Transverse colon (tissue), 4 donors: ENCODE measurements at regions of chr10 and their contacts with region 1.

Region 1: GRCh38 chr10:71319042-71319799 is at the start of gene SLC29A3:
- DNase-seq: peak; percentile 88
- H3K4me3 ChIP-seq: peak within 1 kb of the TSS; percentile 61 to 88 (median 76)
- H3K27ac ChIP-seq: peak within 1 kb of the TSS; percentile 80 to 88 (median 84)
- H3K4me1 ChIP-seq: peaks cover 4 to 21% (median 11%) of the 10 kb centered on the region in 4 donors
- H3K27me3 ChIP-seq: no peaks in the 10 kb centered on the region
- CTCF ChIP-seq: peak; percentile 49 to 75 (median 64)
- EP300 ChIP-seq: no peak
- POLR2A ChIP-seq: peak; percentile 56
- total RNA-seq, gene SLC29A3: 0.75 to 6.4 (median 3.4) TPM

Region 2: DNA sequence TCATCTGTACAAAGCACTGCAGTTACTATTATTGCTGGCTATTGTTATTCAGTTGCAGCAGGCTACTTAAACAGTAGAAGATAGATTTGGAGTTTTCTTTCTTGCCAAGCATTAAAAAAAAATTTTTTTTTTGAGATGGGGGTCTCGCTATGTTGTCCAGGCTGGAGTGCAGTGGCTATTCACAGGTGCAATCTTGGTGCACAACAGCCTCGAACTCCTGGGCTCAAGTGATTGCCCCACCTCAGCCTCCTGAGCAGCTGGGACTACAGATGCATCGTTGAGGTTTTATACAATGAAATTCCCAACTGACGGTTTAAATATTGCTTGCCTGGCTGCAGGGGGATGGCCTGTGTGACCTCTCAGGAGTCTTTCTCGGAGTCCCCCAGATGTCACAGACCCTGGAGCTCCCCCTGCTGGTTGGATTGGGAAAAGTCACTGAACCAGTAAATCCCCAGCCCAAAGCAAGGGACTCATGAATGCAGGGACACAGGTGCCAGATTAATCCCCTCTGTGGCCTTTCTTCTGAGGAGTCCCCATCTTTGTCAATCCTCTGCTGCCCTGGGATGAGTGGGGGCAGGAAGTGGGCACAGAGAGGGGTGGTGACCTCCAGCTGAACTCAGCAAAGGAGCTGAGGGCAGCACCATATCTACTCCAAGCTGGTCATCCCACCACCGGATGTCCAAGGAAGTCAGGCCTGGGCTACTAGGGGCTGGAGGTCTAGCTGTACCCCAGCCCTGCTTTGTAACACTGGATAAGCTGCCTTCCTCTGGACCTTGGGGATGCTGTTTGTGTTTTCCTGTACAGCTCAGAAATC is 250.8 kb after region 1 on chr10:
- in situ Hi-C with region 1: loop called (anchors 10 to 25 kb)
- intact Hi-C with region 1: loop called (anchors 10 kb)
- DNase-seq: peak; percentile 81
- H3K4me3 ChIP-seq: no peak overlapping the region
- H3K27ac ChIP-seq: no peak overlapping the region
- H3K4me1 ChIP-seq: no peaks in the 10 kb centered on the region
- H3K27me3 ChIP-seq: no peaks in the 10 kb centered on the region
- CTCF ChIP-seq: peak; percentile 81 to 91 (median 84)
- EP300 ChIP-seq: no peak
- POLR2A ChIP-seq: no peak

Region 3: GRCh38 chr10:71597821-71598498 is 278.7 kb after region 1 on chr10:
- in situ Hi-C with region 1: loop called in 1 of 4 experiments (anchors 10 kb)
- intact Hi-C with region 1: no loop called
- DNase-seq: peak; percentile 21
- H3K4me3 ChIP-seq: no peak overlapping the region
- H3K27ac ChIP-seq: peak overlapping the region; percentile 67 to 76 (median 74)
- H3K4me1 ChIP-seq: peaks cover 3 to 22% (median 10%) of the 10 kb centered on the region in 4 donors
- H3K27me3 ChIP-seq: no peaks in the 10 kb centered on the region
- CTCF ChIP-seq: no peak
- EP300 ChIP-seq: no peak
- POLR2A ChIP-seq: no peak

Region 4: GRCh38 chr10:71708301-71708703 is 389.1 kb after region 1 on chr10:
- in situ Hi-C with region 1: loop called in 3 of 4 experiments (anchors 10 kb)
- intact Hi-C with region 1: no loop called
- DNase-seq: peak; percentile 62
- H3K4me3 ChIP-seq: no peak overlapping the region
- H3K27ac ChIP-seq: no peak overlapping the region
- H3K4me1 ChIP-seq: peaks cover 6 to 14% (median 7%) of the 10 kb centered on the region in 4 donors
- H3K27me3 ChIP-seq: no peaks in the 10 kb centered on the region
- CTCF ChIP-seq: peak; percentile 78 to 91 (median 81)
- EP300 ChIP-seq: no peak
- POLR2A ChIP-seq: no peak

Region 5: GRCh38 chr10:71812016-71812912 is 493.0 kb after region 1 on chr10:
- in situ Hi-C with region 1: loop called in 2 of 4 experiments (anchors 10 to 25 kb)
- intact Hi-C with region 1: loop called (anchors 10 kb)
- DNase-seq: peak; percentile 78
- H3K4me3 ChIP-seq: no peak overlapping the region
- H3K27ac ChIP-seq: no peak overlapping the region
- H3K4me1 ChIP-seq: peaks cover 0 to 4% (median 0%) of the 10 kb centered on the region in 4 donors
- H3K27me3 ChIP-seq: no peaks in the 10 kb centered on the region
- CTCF ChIP-seq: peak; percentile 86 to 93 (median 91)
- EP300 ChIP-seq: no peak
- POLR2A ChIP-seq: no peak

Region 6: GRCh38 chr10:71893920-71894319 is 574.7 kb after region 1 on chr10:
- in situ Hi-C with region 1: no loop called
- intact Hi-C with region 1: loop called (anchors 10 kb)
- DNase-seq: no peak
- H3K4me3 ChIP-seq: no peak overlapping the region
- H3K27ac ChIP-seq: no peak overlapping the region
- H3K4me1 ChIP-seq: peaks cover 0 to 14% (median 9%) of the 10 kb centered on the region in 4 donors
- H3K27me3 ChIP-seq: peaks cover 3% of the 10 kb centered on the region
- CTCF ChIP-seq: no peak
- EP300 ChIP-seq: no peak
- POLR2A ChIP-seq: no peak